IMR-90 (cell line): ENCODE measurements at regions of chr4 and their contacts with region 1.

Region 1: DNA sequence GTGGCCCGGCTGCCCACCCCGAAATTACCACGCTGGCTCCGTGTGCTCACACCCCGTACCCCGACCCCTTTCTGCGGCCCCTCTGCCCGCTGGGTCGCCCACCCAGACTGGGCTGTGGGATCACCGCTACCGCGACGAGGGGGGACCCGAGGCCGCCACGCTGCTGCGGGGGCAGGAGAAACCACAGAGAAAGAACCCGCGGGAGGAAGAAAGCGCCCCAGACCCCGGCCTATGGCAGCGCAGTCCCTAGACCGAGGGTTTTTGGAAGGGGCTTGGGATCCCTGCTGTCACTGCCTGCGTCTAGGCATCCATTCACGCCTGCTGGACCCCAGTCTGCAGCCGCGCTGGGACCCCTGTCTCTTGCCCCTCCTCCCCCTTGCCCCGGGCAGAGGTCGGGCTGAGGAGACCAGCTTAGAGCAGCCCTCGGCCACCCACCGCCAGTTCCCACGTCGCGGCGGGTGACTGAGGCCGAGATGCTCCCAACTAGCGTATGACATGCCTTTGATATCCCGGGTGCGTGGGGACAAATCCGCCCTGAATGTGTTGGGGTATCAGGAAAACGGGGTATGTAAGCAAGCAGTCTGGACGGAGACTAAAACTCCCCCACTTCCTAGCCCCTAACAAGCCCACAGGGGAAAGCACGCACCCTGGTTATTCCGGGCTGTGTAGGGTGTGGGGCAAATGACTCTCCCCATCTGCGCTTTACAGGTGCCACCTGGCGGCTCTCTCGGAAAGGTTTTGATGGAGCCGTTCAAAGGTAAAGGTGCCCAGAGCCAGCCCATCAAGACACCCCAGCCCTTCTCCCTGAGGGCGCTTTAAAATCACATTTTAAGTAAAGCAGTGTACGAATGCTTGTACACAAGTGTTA is 862 bp upstream of the INPP4B start:
- DNase-seq: no peak
- ATAC-seq: peak; percentile 19; the same call in 1 of the 2 replicates
- H3K4me3 ChIP-seq: peak overlapping the region; percentile 61
- H3K27ac ChIP-seq: peak overlapping the region; percentile 25; the same call in 1 of the 2 replicates
- H3K4me1 ChIP-seq: no peaks in the 10 kb centered on the region
- H3K27me3 ChIP-seq: peaks cover 10% of the 10 kb centered on the region
- CTCF ChIP-seq: no peak
- POLR2A ChIP-seq: no peak
- RAD21 ChIP-seq: no peak

Region 2: GRCh38 chr4:142811034-142811433 is 35.9 kb before region 1 on chr4:
- CTCF ChIA-PET with region 1: no interaction called
- POLR2A ChIA-PET with region 1: no interaction called
- dilution Hi-C with region 1: no loop called
- in situ Hi-C with region 1: no loop called
- intact Hi-C with region 1: loop called (anchors 1 kb)
- DNase-seq: no peak
- ATAC-seq: no peak
- H3K4me3 ChIP-seq: no peak overlapping the region
- H3K27ac ChIP-seq: no peak overlapping the region
- H3K4me1 ChIP-seq: no peaks in the 10 kb centered on the region
- H3K27me3 ChIP-seq: no peaks in the 10 kb centered on the region
- CTCF ChIP-seq: no peak
- POLR2A ChIP-seq: no peak
- RAD21 ChIP-seq: no peak

Region 3: DNA sequence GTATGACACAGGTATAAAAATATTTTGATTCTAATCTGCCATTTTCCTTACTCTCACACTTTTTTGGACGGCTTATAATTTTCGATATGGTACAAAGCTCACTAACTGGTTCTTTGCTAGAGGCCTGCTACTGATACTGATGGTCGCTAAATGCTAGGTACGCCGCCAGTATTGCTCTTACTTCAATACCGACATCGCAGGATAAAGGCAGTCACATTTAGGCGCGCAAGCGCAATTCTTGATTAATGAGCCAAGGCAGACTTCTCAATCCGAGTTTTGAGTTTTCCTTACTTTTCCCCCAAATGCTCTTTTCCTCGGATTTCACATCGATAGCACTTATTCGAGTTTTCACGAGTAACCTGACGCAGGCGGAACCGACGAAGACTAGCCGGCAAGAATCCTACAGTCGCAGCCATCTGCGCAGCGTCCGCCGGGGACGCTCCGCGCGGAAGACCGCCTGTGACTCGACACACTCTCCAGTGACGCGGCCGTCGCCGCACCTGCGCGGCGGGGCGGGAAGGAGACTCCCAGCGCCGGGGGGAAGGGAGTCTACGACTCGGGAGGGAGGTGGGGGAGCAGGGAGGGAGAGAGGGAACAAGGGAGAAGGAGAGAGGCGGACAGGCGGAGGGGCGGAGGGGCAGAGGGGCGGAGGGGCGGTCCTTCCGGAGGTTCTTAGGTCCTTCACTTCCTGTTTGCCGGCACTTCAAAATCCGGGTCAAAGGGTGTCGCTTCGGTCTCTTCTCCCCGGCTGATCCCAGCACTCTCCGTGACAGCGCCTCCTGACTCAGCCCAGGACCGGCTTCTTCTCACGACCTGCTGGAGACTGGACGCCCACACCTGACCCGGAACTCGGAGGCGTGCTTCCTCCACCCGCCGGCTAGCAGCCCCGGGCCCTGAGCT is 337.5 kb after region 1 on chr4 and contains the start of gene USP38:
- CTCF ChIA-PET with region 1: no interaction called
- POLR2A ChIA-PET with region 1: no interaction called
- dilution Hi-C with region 1: no loop called
- in situ Hi-C with region 1: no loop called
- intact Hi-C with region 1: loop called (anchors 10 kb)
- DNase-seq: peak; percentile 94
- ATAC-seq: peak; percentile 88
- H3K4me3 ChIP-seq: peak within 1 kb of the TSS; percentile 74
- H3K27ac ChIP-seq: peak within 1 kb of the TSS; percentile 87
- H3K4me1 ChIP-seq: no peaks in the 10 kb centered on the region
- H3K27me3 ChIP-seq: no peaks in the 10 kb centered on the region
- CTCF ChIP-seq: peak; percentile 14; the same call in 1 of the 2 replicates
- POLR2A ChIP-seq: no peak; the same call in 1 of the 2 replicates
- RAD21 ChIP-seq: no peak
- total RNA-seq, gene USP38: 16.4 and 17.0 TPM in 2 replicates